Common myeloid progenitor, CD34-positive (primary cell): ENCODE measurements at regions of chr14 and their contacts with region 1.

Region 1: DNA sequence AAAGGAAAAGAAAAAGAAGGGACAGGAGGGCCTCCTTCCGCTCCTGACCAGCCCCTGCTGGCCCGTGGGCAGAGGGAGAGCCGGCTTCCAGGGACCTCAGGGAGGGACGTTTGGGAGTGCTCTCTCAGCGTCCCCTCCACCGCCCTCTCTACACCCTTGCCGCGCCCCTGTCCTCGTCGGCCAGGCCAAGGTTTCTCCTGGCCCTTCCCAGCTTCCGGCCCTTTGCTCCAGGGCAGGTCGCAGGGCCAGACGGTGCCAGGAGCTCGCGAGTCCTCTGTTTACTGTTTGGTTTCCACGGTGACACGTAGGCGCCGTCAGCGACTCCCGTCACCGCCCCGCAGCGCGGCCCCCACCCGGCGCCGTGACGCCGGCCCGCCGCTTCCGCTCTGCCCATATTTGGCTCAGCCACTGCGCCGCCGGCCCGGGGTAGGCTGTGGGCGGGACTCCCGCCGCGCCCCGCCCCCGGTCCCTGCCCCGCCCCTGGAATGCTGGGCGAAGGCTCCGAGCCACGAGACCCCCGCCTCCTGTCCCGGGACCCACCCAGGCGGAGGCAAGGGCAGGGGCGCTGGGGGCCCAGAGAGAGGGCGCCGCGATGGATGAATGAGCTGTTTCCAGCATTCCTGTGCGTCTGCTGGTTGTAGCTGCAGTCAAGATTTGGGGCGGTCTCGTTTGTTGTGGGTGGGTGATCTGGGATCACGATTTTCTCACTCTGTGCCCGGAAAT is 15.5 kb downstream of the FOS start:
- DNase-seq: peak; percentile 95 to 96 (median 95)
- H3K4me3 ChIP-seq: peak overlapping the region; percentile 49 to 88 (median 74)
- H3K27ac ChIP-seq: peak overlapping the region; percentile 97 to 99
- H3K4me1 ChIP-seq: peaks cover 10 to 51% (median 37%) of the 10 kb centered on the region in 4 experiments
- H3K27me3 ChIP-seq: no peaks in the 10 kb centered on the region

Region 2: DNA sequence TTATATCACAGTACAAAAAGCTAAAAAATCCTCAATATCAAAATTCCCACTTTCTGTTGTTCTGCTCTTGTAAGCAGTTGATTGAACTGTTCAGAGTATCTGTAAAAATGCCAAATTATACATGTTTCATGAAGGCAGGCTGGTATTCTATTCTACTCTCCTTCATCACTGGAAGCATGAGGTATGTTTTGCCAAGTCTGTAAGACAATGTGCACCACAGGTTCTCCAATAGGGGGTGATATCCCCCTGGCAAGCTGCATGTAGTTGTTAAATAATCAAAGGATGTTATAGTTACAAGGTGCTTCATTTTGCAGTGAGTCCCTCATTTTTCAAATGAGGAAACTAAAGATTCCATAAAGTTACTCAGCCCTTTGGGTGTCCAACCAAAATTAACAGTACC is 152.1 kb before region 1 on chr14:
- CTCF ChIA-PET with region 1: interaction called, 122 read pairs
- POLR2A ChIA-PET with region 1: interaction called, 6 read pairs
- DNase-seq: peak; percentile 63 to 74 (median 73)
- H3K4me3 ChIP-seq: no peak overlapping the region
- H3K27ac ChIP-seq: no peak overlapping the region
- H3K4me1 ChIP-seq: peaks cover 17 to 48% (median 33%) of the 10 kb centered on the region in 4 experiments
- H3K27me3 ChIP-seq: no peaks in the 10 kb centered on the region